K562 (cell line): ENCODE measurements at regions of chr14 and their contacts with region 1.

Region 1: GRCh38 chr14:73825551-73826188 is 26.0 kb upstream of the PTGR2 start:
- DNase-seq: peak; percentile 80 to 91 (median 84)
- ATAC-seq: peak; percentile 97
- H3K4me3 ChIP-seq: no peak overlapping the region
- H3K27ac ChIP-seq: no peak overlapping the region
- H3K4me1 ChIP-seq: peaks cover 0 to 10% of the 10 kb centered on the region in 2 experiments; a peak in 3 of 5 replicates
- H3K27me3 ChIP-seq: no peaks in the 10 kb centered on the region
- CTCF ChIP-seq: peak; percentile 82 to 87 (median 87)
- EP300 ChIP-seq: peak; percentile 40; the same call in 1 of the 2 replicates
- POLR2A ChIP-seq: no peak
- RAD21 ChIP-seq: peak; percentile 89 to 94

Region 2: GRCh38 chr14:73728717-73729330 is 96.8 kb before region 1 on chr14:
- CTCF ChIA-PET with region 1: interaction called, 20 read pairs
- POLR2A ChIA-PET with region 1: interaction called, 3 read pairs
- in situ Hi-C with region 1: loop called (anchors 5 kb)
- intact Hi-C with region 1: loop called (anchors 1 kb)
- DNase-seq: peak; percentile 75 to 89 (median 78)
- ATAC-seq: peak; percentile 79
- H3K4me3 ChIP-seq: no peak overlapping the region
- H3K27ac ChIP-seq: peak overlapping the region; percentile 67
- H3K4me1 ChIP-seq: peaks cover 41% of the 10 kb centered on the region in 2 experiments
- H3K27me3 ChIP-seq: no peaks in the 10 kb centered on the region
- CTCF ChIP-seq: peak; percentile 83 to 89 (median 85)
- EP300 ChIP-seq: no peak
- POLR2A ChIP-seq: no peak
- RAD21 ChIP-seq: peak; percentile 86 to 92

Region 3: DNA sequence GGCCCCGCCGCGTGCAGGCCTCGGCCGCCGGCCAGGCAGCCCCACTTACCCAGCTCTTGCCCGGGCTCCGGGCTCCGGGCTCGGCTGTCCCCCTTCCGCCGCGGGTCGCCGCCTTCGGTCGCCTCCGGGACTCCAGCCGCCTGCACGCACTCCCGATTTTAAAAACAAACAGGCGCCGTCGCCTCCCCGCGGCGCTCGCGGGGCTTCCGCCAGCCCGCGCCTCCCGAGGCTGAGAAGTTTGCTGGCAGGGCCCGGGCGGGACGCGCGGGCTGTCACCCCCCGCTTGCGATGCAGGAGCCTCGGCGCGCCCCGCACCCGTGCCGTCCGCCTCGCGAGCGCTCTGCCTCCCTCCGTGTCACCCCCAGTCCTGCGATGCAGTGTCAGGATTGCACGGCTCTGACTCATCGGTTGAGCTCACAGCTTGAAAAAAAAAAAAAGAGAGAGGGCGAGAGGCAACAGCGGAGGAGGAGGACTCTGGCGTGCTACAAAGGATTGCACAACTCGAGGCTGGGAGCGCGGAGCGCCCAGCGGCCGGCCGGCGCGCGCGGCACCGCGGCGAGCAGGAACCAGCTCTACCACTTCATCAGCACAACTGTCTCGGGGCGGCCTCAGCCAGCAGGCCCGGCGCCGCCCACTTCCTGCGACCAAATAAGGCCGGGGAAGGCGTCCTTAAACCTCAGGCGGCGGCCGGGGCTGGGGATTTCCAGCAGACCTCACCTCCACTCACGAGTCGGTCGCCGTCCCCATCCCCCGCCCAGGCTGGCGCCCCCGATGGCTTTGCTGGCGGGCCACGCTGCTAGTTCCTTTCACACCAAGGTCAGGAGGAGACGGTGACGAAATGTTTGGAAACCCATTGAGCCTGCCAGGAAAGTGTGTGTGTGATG is 65.7 kb before region 1 on chr14:
- CTCF ChIA-PET with region 1: interaction called, 3 read pairs
- POLR2A ChIA-PET with region 1: interaction called, 4 read pairs
- in situ Hi-C with region 1: no loop called
- intact Hi-C with region 1: loop called (anchors 1 kb)
- DNase-seq: peak; percentile 63 to 95 (median 72)
- ATAC-seq: peak; percentile 81
- H3K4me3 ChIP-seq: peak overlapping the region; percentile 76
- H3K27ac ChIP-seq: peak overlapping the region; percentile 92
- H3K4me1 ChIP-seq: peaks cover 65 to 73% of the 10 kb centered on the region in 2 experiments
- H3K27me3 ChIP-seq: no peaks in the 10 kb centered on the region
- CTCF ChIP-seq: no peak; a peak in 1 of 6 replicates
- EP300 ChIP-seq: peak; percentile 19; the same call in 1 of the 2 replicates
- POLR2A ChIP-seq: peak; percentile 86
- RAD21 ChIP-seq: peak in 1 of 2 experiments; percentile 20; a peak in 1 of 4 replicates

Region 4: DNA sequence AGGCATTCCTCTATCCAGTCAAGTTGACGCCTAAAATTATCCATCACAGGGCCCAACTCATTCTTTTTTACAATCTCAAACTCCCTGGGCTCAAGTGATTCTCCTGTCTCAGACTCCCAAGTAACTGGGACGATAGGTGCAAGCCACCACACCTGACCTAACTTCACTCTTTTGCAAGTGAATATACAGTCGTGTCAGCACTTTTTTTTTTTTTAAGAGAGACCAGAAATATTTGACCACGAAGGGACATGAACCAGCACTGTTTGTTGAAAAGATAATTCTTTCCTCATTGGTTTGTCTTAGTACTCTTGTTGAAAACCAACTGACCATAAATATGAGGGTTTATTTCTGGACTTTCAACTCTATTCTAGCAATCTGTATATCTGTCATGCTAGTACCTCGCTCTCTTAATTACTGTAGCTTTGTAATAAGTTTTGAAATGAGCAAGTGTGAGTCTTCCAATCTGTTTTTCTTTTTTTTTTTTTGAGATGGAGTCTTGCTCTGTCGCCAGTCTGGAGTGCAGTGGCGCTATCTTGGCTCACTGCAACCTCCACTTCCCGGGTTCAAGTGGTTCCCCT is 40.0 kb after region 1 on chr14:
- CTCF ChIA-PET with region 1: no interaction called
- POLR2A ChIA-PET with region 1: no interaction called
- in situ Hi-C with region 1: no loop called
- intact Hi-C with region 1: loop called (anchors 5 kb)
- DNase-seq: no peak
- ATAC-seq: no peak
- H3K4me3 ChIP-seq: no peak overlapping the region
- H3K27ac ChIP-seq: no peak overlapping the region
- H3K4me1 ChIP-seq: peaks cover 0 to 3% of the 10 kb centered on the region in 2 experiments; a peak in 3 of 5 replicates
- H3K27me3 ChIP-seq: no peaks in the 10 kb centered on the region
- CTCF ChIP-seq: no peak
- EP300 ChIP-seq: no peak
- POLR2A ChIP-seq: no peak
- RAD21 ChIP-seq: no peak

Region 5: GRCh38 chr14:73977600-73978295 is 152.1 kb after region 1 on chr14:
- CTCF ChIA-PET with region 1: no interaction called
- POLR2A ChIA-PET with region 1: no interaction called
- in situ Hi-C with region 1: no loop called
- intact Hi-C with region 1: no loop called
- DNase-seq: no peak
- ATAC-seq: no peak
- H3K4me3 ChIP-seq: no peak overlapping the region
- H3K27ac ChIP-seq: no peak overlapping the region
- H3K4me1 ChIP-seq: no peaks in the 10 kb centered on the region; a peak in 2 of 5 replicates
- H3K27me3 ChIP-seq: no peaks in the 10 kb centered on the region
- CTCF ChIP-seq: no peak
- EP300 ChIP-seq: no peak
- POLR2A ChIP-seq: no peak
- RAD21 ChIP-seq: no peak

Region 6: GRCh38 chr14:74038015-74038859 is 212.6 kb after region 1 on chr14:
- CTCF ChIA-PET with region 1: no interaction called
- POLR2A ChIA-PET with region 1: no interaction called
- in situ Hi-C with region 1: no loop called
- intact Hi-C with region 1: loop called (anchors 5 kb)
- DNase-seq: peak; percentile 25 to 62 (median 29)
- ATAC-seq: peak; percentile 81
- H3K4me3 ChIP-seq: no peak overlapping the region
- H3K27ac ChIP-seq: no peak overlapping the region
- H3K4me1 ChIP-seq: 0 out of 5 replicates have a peak, but pooled peaks cover 0 to 2% of the 10 kb centered on the region in 2 experiments
- H3K27me3 ChIP-seq: no peaks in the 10 kb centered on the region
- CTCF ChIP-seq: peak; percentile 17 to 59 (median 38); a peak in 5 of 6 replicates
- EP300 ChIP-seq: no peak
- POLR2A ChIP-seq: no peak
- RAD21 ChIP-seq: peak; percentile 60 to 71